Posterior vena cava (tissue), 2 donors: ENCODE measurements at regions of chr19 and their contacts with region 1.

Region 1: GRCh38 chr19:6141217-6141616 is 5.8 kb downstream of the ACSBG2 start:
- DNase-seq: no peak

Region 2: DNA sequence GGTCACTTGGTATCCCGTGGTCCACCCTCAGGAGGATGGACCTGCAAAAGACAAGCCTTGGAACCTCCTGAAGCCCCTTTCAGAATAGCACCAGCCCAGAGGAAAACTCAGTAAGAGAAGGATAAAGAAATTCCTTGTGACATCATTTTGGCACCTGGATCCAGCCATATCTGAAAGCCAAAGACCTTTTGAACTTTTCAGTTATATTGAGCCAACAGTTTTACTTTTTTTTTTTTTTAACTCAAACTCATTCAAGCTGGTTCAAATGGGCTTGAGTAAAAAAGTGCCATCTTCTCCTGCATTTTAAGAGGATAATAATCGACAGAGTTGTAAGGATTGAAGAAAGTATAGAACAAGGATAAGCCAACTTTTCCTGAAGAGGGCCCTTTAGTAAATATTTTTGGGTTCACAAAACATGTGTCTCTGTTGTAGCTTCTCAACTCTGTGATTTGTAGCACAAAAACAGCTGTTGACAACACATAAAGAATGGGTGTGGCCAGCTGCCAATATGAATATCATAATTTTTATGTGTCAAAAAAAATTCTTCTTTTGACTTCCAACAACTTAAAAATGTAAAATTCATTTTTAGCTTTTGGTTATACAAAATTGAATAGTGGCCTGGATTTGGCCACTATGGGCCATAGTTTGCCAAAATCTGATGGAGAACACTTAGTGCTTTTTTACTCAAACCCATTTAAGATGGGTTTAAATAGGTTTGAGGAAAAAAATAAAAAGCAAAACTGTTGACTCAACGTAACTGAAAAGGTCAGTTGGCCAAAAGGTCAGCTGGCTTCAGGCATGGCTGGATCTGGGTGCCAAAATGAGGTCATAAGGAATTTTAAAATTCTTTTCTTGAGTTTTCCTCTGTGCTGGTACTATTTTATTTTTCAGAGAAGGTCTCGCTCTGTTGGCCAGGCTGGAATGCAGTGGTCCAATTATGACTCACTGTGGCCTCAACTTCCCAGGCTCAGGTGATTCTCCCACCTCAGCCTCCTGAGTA is 44.9 kb after region 1 on chr19:
- intact Hi-C with region 1: loop called in 1 of 2 experiments (anchors 1 kb)
- DNase-seq: peak; percentile 78

Region 3: GRCh38 chr19:6199240-6199983 is 58.2 kb after region 1 on chr19:
- intact Hi-C with region 1: no loop called
- DNase-seq: peak; percentile 100